Activated B cell treated with CpG ODN at 0.5 μM for 24 hours (primary cell): ENCODE measurements at regions of chr7 and their contacts with region 1.

Region 1: GRCh38 chr7:98106647-98107445 is at the start of gene LMTK2:
- DNase-seq: peak; percentile 99
- ATAC-seq: peak; percentile 100
- H3K4me3 Mint-ChIP-seq: peak within 1 kb of the TSS; percentile 97
- H3K27ac Mint-ChIP-seq: peak within 1 kb of the TSS; percentile 86
- H3K4me1 Mint-ChIP-seq: peaks cover 16% of the 10 kb centered on the region
- H3K27me3 Mint-ChIP-seq: peaks cover 8% of the 10 kb centered on the region
- CTCF ChIP-seq: peak; percentile 80
- total RNA-seq, gene LMTK2: 9.6 and 10.4 TPM in 2 replicates

Region 2: DNA sequence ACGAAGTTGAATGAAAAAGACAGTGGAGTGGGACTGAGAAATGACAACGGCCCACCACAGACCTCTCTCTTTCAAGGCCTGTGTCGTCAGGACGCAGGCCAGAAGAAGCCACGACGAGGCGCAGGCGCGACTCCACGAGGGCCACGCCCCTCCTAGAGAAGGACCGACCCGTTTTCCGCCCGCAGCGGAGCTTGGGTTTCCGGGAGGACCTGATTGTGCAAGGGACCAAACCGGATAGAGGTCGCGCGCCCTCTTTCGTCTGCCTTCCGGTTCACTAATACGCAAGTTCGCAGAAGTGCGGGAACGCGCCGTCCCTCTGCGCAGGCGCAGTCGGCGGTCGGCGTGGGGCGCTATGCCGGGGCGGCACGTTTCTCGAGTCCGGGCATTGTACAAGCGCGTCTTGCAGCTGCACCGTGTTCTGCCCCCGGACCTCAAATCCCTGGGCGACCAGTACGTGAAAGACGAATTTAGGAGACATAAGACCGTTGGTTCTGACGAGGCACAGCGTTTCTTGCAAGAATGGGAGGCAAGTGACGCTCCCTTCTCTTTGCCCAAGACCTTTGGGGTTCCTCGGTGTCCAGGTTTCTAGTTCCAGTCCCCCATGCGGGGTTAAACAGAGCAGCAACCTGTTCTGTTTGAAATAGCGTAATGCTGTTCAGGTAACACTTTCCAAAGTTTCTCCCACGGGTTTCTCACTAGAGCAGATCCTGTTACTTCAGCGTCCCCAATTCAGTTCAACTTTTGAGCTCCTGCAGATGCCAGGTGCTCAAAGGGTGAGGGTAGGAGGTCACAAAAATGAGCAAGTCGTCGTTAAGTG is 989.3 kb before region 1 on chr7 and contains the start of gene SDHAF3:
- CTCF ChIA-PET with region 1: no interaction called
- POLR2A ChIA-PET with region 1: no interaction called
- intact Hi-C with region 1: loop called (anchors 1 kb)
- DNase-seq: peak; percentile 96
- ATAC-seq: peak; percentile 87
- H3K4me3 Mint-ChIP-seq: peak within 1 kb of the TSS; percentile 95
- H3K27ac Mint-ChIP-seq: peak within 1 kb of the TSS; percentile 96
- H3K4me1 Mint-ChIP-seq: peaks cover 41% of the 10 kb centered on the region
- H3K27me3 Mint-ChIP-seq: no peaks in the 10 kb centered on the region
- CTCF ChIP-seq: no peak
- total RNA-seq, gene SDHAF3: 20.6 and 24.2 TPM in 2 replicates

Region 3: GRCh38 chr7:97971990-97972943 is 134.6 kb before region 1 on chr7:
- CTCF ChIA-PET with region 1: no interaction called
- POLR2A ChIA-PET with region 1: no interaction called
- intact Hi-C with region 1: loop called (anchors 5 kb)
- DNase-seq: peak; percentile 75
- ATAC-seq: peak; percentile 92
- H3K4me3 Mint-ChIP-seq: peak overlapping the region; percentile 92
- H3K27ac Mint-ChIP-seq: peak overlapping the region; percentile 91
- H3K4me1 Mint-ChIP-seq: peaks cover 22% of the 10 kb centered on the region
- H3K27me3 Mint-ChIP-seq: peaks cover 2% of the 10 kb centered on the region
- CTCF ChIP-seq: no peak

Region 4: DNA sequence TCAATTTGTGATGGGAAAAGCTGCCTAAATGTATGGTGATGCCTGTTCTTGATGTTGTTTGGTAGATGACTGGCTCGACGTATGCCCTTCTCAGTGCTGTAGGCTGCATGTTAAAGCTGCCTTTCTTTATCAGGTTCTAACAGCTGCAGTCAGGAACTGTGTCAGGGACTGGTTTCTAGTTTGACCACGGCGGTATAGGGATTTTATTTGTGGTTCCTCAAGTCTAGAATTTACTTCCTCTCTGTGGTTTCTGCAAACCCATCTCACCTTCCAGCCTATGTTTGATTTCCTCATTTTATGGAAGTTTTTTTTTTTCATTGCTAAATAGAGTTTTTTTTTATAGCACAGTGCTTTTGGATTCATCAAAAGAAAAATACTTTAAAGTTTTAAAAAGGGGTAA is 26.3 kb after region 1 on chr7:
- CTCF ChIA-PET with region 1: interaction called, 5 read pairs
- POLR2A ChIA-PET with region 1: interaction called, 3 read pairs
- intact Hi-C with region 1: loop called (anchors 1 kb)
- DNase-seq: no peak
- ATAC-seq: peak; percentile 70
- H3K4me3 Mint-ChIP-seq: peak overlapping the region; percentile 50
- H3K27ac Mint-ChIP-seq: no peak overlapping the region
- H3K4me1 Mint-ChIP-seq: peaks cover 72% of the 10 kb centered on the region
- H3K27me3 Mint-ChIP-seq: peaks cover 49% of the 10 kb centered on the region
- CTCF ChIP-seq: no peak

Region 5: GRCh38 chr7:98240961-98241674 is 134.3 kb after region 1 on chr7:
- CTCF ChIA-PET with region 1: no interaction called
- POLR2A ChIA-PET with region 1: no interaction called
- intact Hi-C with region 1: loop called (anchors 1 kb)
- DNase-seq: no peak
- ATAC-seq: peak; percentile 71
- H3K4me3 Mint-ChIP-seq: no peak overlapping the region
- H3K27ac Mint-ChIP-seq: no peak overlapping the region
- H3K4me1 Mint-ChIP-seq: no peaks in the 10 kb centered on the region
- H3K27me3 Mint-ChIP-seq: no peaks in the 10 kb centered on the region
- CTCF ChIP-seq: no peak

Region 6: DNA sequence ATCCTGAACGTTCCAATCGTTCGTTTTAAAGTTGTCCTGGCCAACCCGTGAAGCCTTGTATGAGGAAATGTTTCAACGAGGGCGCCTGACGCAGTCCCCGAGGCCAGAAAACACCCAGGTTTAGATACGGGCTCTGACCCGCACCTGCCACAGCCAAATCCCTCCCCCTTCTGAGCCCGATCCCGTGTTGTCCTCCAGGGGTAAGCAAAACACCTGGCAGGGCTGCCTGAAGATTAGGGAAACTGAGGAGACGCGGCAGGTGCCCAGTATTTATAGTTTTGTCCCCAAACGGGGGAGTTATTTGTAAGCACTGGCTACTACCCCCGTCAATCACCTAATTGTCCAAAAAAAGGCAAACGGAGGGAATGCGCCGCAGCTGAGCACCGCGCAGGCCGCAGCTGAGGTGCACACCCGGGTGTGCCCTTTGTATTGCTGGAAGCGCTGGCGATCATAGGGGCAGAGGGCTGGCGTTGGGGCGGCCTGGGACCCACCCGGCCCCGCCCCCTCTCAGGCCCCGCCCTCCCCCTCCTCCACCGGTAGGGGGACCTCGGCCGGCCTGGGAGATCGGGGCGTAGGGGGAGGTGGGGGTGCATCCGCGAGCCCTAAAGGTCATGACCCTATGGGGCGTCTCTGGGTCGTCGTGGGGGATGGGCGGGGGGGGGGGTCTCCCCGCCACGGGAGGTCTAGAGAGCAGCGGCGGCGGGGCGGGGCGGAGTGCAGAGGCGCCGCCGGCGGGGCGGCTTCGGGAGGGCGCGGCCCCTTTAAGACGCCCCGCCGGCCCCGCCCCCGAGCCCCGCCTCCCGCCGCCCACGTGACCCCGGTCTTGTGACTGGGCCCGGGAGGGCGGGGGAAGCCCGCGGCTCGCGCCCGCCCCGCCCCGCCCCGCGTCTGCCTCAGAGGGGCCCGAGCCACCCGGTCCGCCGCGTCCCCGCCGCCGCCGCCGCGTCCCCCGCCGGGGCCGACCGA is 174.2 kb after region 1 on chr7 and contains the start of gene BRI3:
- CTCF ChIA-PET with region 1: no interaction called
- POLR2A ChIA-PET with region 1: no interaction called
- intact Hi-C with region 1: loop called (anchors 1 kb)
- DNase-seq: peak; percentile 86
- ATAC-seq: peak; percentile 82
- H3K4me3 Mint-ChIP-seq: peak within 1 kb of the TSS; percentile 86
- H3K27ac Mint-ChIP-seq: peak within 1 kb of the TSS; percentile 75
- H3K4me1 Mint-ChIP-seq: peaks cover 36% of the 10 kb centered on the region
- H3K27me3 Mint-ChIP-seq: no peaks in the 10 kb centered on the region
- CTCF ChIP-seq: no peak
- total RNA-seq, gene BRI3: 53.7 and 55.9 TPM in 2 replicates

Region 7: GRCh38 chr7:98878365-98879165 is 771.7 kb after region 1 on chr7 and contains the start of gene TRRAP:
- CTCF ChIA-PET with region 1: no interaction called
- POLR2A ChIA-PET with region 1: no interaction called
- intact Hi-C with region 1: loop called (anchors 10 kb)
- DNase-seq: peak; percentile 80
- ATAC-seq: peak; percentile 81
- H3K4me3 Mint-ChIP-seq: peak within 1 kb of the TSS; percentile 91
- H3K27ac Mint-ChIP-seq: peak within 1 kb of the TSS; percentile 93
- H3K4me1 Mint-ChIP-seq: peaks cover 19% of the 10 kb centered on the region
- H3K27me3 Mint-ChIP-seq: peaks cover 3% of the 10 kb centered on the region
- CTCF ChIP-seq: peak; percentile 82
- total RNA-seq, gene TRRAP: 73.9 and 77.9 TPM in 2 replicates